Left cardiac atrium (tissue), 4 donors: ENCODE measurements at regions of chr4 and their contacts with region 1.

Region 1: DNA sequence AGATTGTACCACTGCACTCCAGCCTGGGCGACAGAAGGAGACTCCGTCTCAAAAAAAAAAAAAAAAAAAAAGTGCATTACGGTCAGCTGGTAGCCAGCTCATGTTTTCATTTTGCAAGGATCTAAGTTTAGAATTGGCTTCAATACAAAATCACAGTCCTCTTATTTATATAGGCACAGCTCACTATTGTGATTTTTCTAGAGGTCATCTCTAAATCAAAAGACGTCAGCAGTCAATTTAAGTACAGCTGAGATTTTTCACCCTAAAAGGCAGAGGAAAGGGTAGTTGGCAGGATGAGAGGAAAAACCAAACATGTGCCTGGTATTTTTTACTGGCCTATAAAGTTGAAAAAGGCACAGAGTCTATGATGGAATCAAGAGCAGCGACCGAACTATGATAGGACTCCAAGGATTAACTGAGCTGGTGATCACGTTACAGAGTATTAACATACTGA is 30.8 kb downstream of the ASB5 start:
- DNase-seq: no peak
- ATAC-seq: peak; percentile 75 to 81

Region 2: DNA sequence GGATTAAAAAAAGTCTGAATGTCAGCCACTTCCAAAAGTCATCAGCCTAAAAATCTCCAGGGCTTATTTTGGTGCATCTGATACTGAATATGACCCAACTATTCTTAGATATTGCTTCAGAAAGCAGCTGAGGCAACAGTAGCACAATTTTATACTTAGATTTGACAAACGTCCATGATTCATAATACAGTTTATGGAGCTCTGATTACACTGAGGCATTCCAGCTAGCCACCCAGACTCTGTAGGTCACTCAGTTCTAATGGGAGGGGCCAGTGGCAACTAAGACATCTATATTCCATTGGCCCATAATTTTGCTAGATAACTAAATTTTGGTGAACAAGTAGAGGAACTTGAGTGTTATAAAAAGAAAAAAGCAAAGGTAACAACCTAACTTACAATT is 53.1 kb before region 1 on chr4:
- intact Hi-C with region 1: loop called in 1 of 2 experiments (anchors 10 kb)
- DNase-seq: no peak
- ATAC-seq: peak; percentile 76 to 81

Region 3: DNA sequence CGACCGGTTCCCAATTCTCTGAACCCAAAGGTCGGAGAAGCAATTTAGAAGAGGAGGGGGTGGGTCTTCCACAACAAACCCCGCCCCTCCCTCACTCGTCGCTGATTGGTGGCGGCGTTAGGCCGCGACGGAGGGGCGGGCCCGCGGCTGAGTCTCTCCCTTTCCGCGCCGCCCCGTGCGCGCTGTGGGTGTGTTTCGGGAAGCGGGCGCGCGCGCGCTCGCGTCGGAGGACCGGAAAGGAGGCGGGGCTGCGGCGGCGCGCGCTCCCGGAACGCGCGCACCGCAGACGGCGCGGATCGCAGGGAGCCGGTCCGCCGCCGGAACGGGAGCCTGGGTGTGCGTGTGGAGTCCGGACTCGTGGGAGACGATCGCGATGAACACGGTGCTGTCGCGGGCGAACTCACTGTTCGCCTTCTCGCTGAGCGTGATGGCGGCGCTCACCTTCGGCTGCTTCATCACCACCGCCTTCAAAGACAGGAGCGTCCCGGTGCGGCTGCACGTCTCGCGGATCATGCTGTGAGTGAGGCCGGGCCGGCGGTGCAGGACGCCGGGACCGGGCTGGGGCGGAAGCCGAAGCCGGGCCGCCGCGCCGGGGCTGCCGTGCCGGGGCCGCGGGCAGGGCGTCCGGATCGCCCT is 81.6 kb after region 1 on chr4 and contains the start of gene SPCS3:
- intact Hi-C with region 1: loop called in 1 of 2 experiments (anchors 10 kb)
- DNase-seq: peak; percentile 96
- ATAC-seq: peak; percentile 98 to 99
- total RNA-seq, gene SPCS3: 92.8 to 130 TPM

Region 4: DNA sequence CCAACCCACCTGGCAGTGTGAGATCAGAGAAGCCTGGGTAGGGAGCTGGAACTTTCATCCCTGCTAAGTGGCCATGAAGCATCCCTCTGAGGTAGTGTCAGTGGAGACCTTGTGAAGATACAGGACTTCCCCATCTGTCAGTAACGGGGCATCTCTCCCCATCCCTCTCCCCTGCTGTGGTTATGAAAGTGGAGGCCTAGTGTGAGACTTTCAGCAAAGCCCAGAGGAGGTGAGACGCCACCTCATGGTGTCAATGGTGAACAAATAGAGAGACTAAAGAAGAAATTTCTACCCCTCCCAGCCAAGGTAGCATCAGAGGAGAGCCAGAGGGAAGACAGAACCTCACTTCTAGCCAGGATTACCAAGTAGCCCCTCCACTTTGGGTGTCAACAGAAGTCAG is 404.3 kb after region 1 on chr4:
- intact Hi-C with region 1: no loop called
- DNase-seq: no peak
- ATAC-seq: no peak